Panc1 (cell line): ENCODE measurements at regions of chr2 and their contacts with region 1.

Region 1: GRCh38 chr2:46937471-46937901 is 21.9 kb upstream of the MCFD2 start:
- DNase-seq: no peak
- ATAC-seq: no peak
- H3K4me3 ChIP-seq: no peak overlapping the region
- H3K27ac ChIP-seq: no peak overlapping the region
- H3K4me1 ChIP-seq: peaks cover 16% of the 10 kb centered on the region
- H3K27me3 ChIP-seq: no peaks in the 10 kb centered on the region
- CTCF ChIP-seq: peak; percentile 65

Region 2: DNA sequence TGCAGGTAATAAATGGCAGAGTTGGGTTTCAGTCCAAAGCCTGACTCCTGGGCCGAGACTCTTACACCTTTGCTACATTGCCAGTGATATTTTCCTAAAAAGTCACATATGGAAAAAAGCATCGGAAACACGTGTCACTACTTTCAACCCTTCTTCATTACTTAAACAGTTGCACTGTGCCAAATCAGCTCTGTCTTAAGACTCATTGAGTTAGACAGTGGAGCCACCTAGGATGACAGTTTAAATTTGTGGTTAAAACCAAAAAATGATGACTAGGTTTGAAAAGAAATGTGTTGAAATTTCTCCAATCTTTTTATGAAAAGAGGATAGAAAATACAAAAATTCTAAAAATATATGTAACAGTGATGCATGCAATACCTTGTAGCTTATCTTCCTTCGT is 360.6 kb before region 1 on chr2:
- CTCF ChIA-PET with region 1: no interaction called
- POLR2A ChIA-PET with region 1: interaction called, 10 read pairs
- in situ Hi-C with region 1: no loop called
- intact Hi-C with region 1: no loop called
- DNase-seq: no peak
- ATAC-seq: no peak
- H3K4me3 ChIP-seq: no peak overlapping the region
- H3K27ac ChIP-seq: no peak overlapping the region
- H3K4me1 ChIP-seq: no peaks in the 10 kb centered on the region
- H3K27me3 ChIP-seq: no peaks in the 10 kb centered on the region
- CTCF ChIP-seq: no peak

Region 3: GRCh38 chr2:46749042-46749531 is 188.4 kb before region 1 on chr2:
- CTCF ChIA-PET with region 1: no interaction called
- POLR2A ChIA-PET with region 1: no interaction called
- in situ Hi-C with region 1: no loop called
- intact Hi-C with region 1: no loop called
- DNase-seq: peak; percentile 25
- ATAC-seq: peak; percentile 88
- H3K4me3 ChIP-seq: no peak overlapping the region
- H3K27ac ChIP-seq: 0 out of 2 replicates have a peak overlapping the region, but pooled peaks have one; percentile 29
- H3K4me1 ChIP-seq: peaks cover 8% of the 10 kb centered on the region
- H3K27me3 ChIP-seq: no peaks in the 10 kb centered on the region
- CTCF ChIP-seq: no peak

Region 4: GRCh38 chr2:46923041-46923528 is 14.4 kb before region 1 on chr2:
- CTCF ChIA-PET with region 1: interaction called, 10 read pairs
- POLR2A ChIA-PET with region 1: no interaction called
- in situ Hi-C with region 1: no loop called
- intact Hi-C with region 1: no loop called
- DNase-seq: no peak
- ATAC-seq: no peak
- H3K4me3 ChIP-seq: no peak overlapping the region
- H3K27ac ChIP-seq: no peak overlapping the region
- H3K4me1 ChIP-seq: no peaks in the 10 kb centered on the region
- H3K27me3 ChIP-seq: no peaks in the 10 kb centered on the region
- CTCF ChIP-seq: no peak

Region 5: GRCh38 chr2:46988733-46989481 is 51.4 kb after region 1 on chr2:
- CTCF ChIA-PET with region 1: no interaction called
- POLR2A ChIA-PET with region 1: no interaction called
- in situ Hi-C with region 1: no loop called
- intact Hi-C with region 1: no loop called
- DNase-seq: no peak
- ATAC-seq: 0 out of 2 replicates have a peak, but pooled peaks have one; percentile 6
- H3K4me3 ChIP-seq: no peak overlapping the region
- H3K27ac ChIP-seq: peak overlapping the region; percentile 26; the same call in 1 of the 2 replicates
- H3K4me1 ChIP-seq: peaks cover 28% of the 10 kb centered on the region
- H3K27me3 ChIP-seq: no peaks in the 10 kb centered on the region
- CTCF ChIP-seq: no peak; the same call in 1 of the 2 replicates

Region 6: DNA sequence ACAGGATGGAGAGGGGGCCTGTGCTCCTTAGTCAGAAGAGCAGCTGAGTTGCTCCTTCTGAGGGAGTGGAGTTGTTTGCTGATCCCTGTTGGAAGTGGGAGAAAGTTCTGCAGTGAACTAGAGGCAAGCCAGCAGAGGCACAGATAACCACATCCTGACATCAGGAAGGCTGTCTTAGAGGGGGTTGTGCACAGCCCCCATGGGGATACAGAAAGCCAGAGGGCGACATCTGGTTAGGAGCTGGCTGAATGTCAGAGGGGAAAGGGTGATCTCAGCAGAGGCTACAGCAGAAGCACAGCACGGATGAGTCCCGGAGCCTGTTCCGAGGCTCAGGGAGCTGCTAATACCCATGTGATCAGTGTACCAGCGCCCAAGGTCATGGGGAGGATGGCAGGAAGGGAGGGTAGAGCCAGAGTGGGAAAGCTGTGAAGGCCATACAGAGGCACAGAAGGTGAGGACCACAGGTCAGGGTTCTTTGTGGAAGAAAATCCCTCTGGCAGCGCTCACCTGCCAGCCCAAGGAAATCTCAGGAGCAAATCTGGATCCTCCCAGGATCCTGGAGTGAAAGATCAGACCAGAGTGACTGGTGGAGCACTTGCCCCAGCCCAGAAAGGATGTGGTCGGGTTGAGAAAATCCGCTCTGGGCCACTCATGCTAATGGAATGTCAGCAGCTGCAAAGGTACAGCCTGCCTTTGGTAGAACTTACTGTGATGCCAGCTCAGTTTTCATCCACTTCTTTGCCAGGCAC is 105.8 kb after region 1 on chr2:
- CTCF ChIA-PET with region 1: no interaction called
- POLR2A ChIA-PET with region 1: no interaction called
- in situ Hi-C with region 1: no loop called
- intact Hi-C with region 1: no loop called
- DNase-seq: peak; percentile 92
- ATAC-seq: peak; percentile 93
- H3K4me3 ChIP-seq: peak overlapping the region in 1 of 2 experiments; percentile 25; a peak in 2 of 4 replicates
- H3K27ac ChIP-seq: peak overlapping the region; percentile 87
- H3K4me1 ChIP-seq: peaks cover 37% of the 10 kb centered on the region
- H3K27me3 ChIP-seq: no peaks in the 10 kb centered on the region
- CTCF ChIP-seq: no peak